Activated CD8-positive, alpha-beta T cell treated with anti-CD3 and anti-CD28 coated beads for 36 hours (primary cell): ENCODE measurements at regions of chr15 and their contacts with region 1.

Region 1: GRCh38 chr15:71800835-71801745 is 9.3 kb upstream of the NR2E3 start:
- DNase-seq: peak; percentile 31
- ATAC-seq: peak; percentile 56
- H3K4me3 Mint-ChIP-seq: no peak overlapping the region
- H3K27ac Mint-ChIP-seq: no peak overlapping the region
- H3K4me1 Mint-ChIP-seq: no peaks in the 10 kb centered on the region
- H3K27me3 Mint-ChIP-seq: peaks cover 21% of the 10 kb centered on the region
- CTCF ChIP-seq: peak; percentile 70

Region 2: GRCh38 chr15:71743861-71744382 is 57.2 kb before region 1 on chr15:
- CTCF ChIA-PET with region 1: interaction called, 15 read pairs
- POLR2A ChIA-PET with region 1: no interaction called
- intact Hi-C with region 1: no loop called
- DNase-seq: peak; percentile 69
- ATAC-seq: peak; percentile 20
- H3K4me3 Mint-ChIP-seq: no peak overlapping the region
- H3K27ac Mint-ChIP-seq: no peak overlapping the region
- H3K4me1 Mint-ChIP-seq: peaks cover 3% of the 10 kb centered on the region
- H3K27me3 Mint-ChIP-seq: peaks cover 4% of the 10 kb centered on the region
- CTCF ChIP-seq: peak; percentile 82